Right ventricle myocardium inferior (tissue), 1 donor: ENCODE measurements at regions of chr15 and their contacts with region 1.

Region 1: GRCh38 chr15:34259566-34259965 is 34.8 kb downstream of the EMC4 start:
- DNase-seq: no peak
- ATAC-seq: peak; percentile 91

Region 2: GRCh38 chr15:34279341-34279740 is 19.8 kb after region 1 on chr15:
- intact Hi-C with region 1: no loop called
- DNase-seq: no peak
- ATAC-seq: peak; percentile 31

Region 3: DNA sequence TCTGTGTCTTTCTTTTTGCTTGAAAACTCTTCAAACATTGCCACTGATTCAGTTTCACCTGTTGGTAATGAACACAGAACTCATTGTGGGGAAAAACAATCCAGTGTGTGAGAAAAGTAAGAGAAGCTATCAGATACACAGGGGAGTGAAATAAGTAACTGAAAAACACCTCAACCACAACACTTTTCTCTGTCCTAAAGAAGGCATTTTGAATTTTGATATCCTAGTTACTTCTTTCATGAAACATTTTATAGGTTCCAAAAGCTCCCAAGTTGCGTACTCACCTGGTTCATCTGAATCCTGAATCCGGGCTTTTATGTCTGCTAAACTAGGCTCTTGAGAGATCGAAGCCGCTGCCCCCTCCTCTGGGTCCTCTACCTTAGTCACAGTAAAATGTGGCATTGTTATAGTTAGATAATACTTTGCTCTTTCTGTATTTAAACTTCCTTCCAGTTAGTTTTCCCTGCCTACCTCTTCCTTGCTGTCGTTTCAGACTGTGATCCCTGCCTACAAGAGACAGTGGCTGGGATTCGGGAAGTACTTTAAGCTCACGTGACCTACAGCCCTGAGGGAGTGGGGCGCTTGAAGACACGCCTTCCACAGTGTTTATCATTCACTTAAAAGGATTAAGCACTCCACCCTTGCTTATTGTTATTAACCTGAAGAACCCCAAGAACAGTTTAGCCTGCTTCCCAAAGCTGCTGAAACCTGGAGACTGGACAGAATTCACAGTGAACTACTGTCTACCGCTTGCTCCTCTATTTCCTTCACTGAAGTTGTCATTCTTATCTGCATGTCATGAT is 58.9 kb after region 1 on chr15:
- intact Hi-C with region 1: loop called (anchors 5 kb)
- DNase-seq: no peak
- ATAC-seq: peak; percentile 97

Region 4: GRCh38 chr15:34337557-34338306 is 78.2 kb after region 1 on chr15 and contains the start of gene SLC12A6:
- intact Hi-C with region 1: loop called (anchors 5 kb)
- DNase-seq: peak; percentile 96
- ATAC-seq: peak; percentile 98
- total RNA-seq, gene SLC12A6: 30.4 TPM

Region 5: DNA sequence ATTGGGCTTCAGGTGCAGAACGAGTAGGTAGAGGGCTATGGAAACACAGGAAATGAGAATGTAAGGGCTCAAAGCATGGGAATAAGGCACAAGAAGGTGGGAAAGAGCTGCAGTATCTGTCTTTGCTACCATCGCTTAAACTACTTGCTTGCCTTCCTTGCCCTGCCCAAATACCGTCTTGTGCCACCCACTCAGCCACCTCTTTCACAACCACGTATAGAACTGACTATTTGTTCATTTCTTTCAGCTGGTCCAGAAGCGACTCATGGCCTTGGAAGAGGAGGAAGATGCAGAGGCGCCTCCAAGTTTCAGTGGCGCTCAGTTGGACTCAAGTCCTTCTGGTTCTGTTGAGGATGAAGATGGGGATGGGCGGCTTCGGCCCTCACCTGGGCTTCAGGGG is 95.7 kb after region 1 on chr15:
- intact Hi-C with region 1: no loop called
- DNase-seq: no peak
- ATAC-seq: no peak